Heart left ventricle (tissue), 16 donors: ENCODE measurements at regions of chr16 and their contacts with region 1.

Region 1: GRCh38 chr16:30698139-30698815 is 694 bp upstream of the SRCAP start:
- DNase-seq: peak; percentile 99 to 100 (median 99)
- ATAC-seq: peak; percentile 82 to 90 (median 88)
- H3K4me3 ChIP-seq: peak overlapping the region; percentile 79 to 100 (median 95)
- H3K27ac ChIP-seq: peak overlapping the region; percentile 95 to 100 (median 99)
- H3K4me1 ChIP-seq: peaks cover 6 to 41% (median 28%) of the 10 kb centered on the region in 12 donors
- H3K27me3 ChIP-seq: no peaks in the 10 kb centered on the region
- CTCF ChIP-seq: peak in 1 of 12 donors; percentile 8
- POLR2A ChIP-seq: peak; percentile 23 to 85

Region 2: GRCh38 chr16:30473231-30474073 is 224.8 kb before region 1 on chr16:
- intact Hi-C with region 1: no loop called
- DNase-seq: peak in 1 of 5 donors; percentile 24
- ATAC-seq: peak in 2 of 4 donors; percentile 41 to 47
- H3K4me3 ChIP-seq: peak overlapping the region in 6 of 12 donors; percentile 5 to 61 (median 16)
- H3K27ac ChIP-seq: peak overlapping the region in 2 of 12 donors; percentile 3 to 80
- H3K4me1 ChIP-seq: peaks cover 0 to 52% (median 0%) of the 10 kb centered on the region in 12 donors
- H3K27me3 ChIP-seq: peaks cover 5 to 59% (median 10%) of the 10 kb centered on the region in 9 donors
- CTCF ChIP-seq: no peak
- POLR2A ChIP-seq: no peak

Region 3: DNA sequence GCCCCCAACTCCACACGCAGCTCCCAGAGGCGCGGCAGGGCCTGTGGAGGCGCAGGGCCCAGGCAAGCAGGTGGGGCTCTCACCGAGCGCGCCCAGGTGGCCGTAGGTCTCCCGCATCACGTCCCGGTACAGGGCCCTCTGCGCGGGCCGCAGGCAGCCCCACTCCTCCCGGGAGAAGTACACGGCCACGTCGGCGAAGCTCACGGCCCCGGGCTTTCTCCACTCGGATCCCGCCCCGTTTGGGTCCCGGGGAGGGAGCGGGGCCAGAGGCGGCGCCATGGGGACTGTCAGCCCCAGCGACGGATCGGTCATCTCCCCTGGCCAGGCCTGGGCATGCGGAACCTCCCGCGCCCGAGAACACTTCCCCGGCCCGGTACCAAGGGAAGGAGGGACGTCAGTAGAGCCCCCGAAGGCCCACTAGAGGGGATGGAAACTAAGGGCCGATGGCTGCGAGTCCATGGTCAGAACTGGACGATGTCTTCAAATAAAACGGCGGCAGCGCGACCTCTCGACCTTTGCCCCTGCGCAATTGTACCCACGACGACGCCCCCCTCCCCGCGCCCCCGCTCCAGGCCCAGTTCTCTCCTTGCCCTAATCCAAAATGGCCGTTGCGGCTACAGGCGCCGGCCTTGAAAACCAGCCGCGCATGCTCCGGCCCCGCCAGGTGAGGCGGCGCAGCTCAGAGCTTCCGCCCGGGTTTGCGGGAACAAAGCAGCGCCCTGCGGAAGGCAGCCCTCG is 163.7 kb before region 1 on chr16 and contains the start of gene ZNF747:
- intact Hi-C with region 1: no loop called
- DNase-seq: peak; percentile 95 to 96 (median 96)
- ATAC-seq: peak; percentile 88 to 95 (median 90)
- H3K4me3 ChIP-seq: peak within 1 kb of the TSS; percentile 31 to 94 (median 82)
- H3K27ac ChIP-seq: peak within 1 kb of the TSS; percentile 86 to 99 (median 94)
- H3K4me1 ChIP-seq: peaks cover 0 to 34% (median 21%) of the 10 kb centered on the region in 12 donors
- H3K27me3 ChIP-seq: no peaks in the 10 kb centered on the region
- CTCF ChIP-seq: peak in 2 of 12 donors; percentile 12 to 13
- POLR2A ChIP-seq: peak in 1 of 2 donors; percentile 63
- total RNA-seq, gene ZNF747: 8.6 to 15.2 (median 10.5) TPM

Region 4: DNA sequence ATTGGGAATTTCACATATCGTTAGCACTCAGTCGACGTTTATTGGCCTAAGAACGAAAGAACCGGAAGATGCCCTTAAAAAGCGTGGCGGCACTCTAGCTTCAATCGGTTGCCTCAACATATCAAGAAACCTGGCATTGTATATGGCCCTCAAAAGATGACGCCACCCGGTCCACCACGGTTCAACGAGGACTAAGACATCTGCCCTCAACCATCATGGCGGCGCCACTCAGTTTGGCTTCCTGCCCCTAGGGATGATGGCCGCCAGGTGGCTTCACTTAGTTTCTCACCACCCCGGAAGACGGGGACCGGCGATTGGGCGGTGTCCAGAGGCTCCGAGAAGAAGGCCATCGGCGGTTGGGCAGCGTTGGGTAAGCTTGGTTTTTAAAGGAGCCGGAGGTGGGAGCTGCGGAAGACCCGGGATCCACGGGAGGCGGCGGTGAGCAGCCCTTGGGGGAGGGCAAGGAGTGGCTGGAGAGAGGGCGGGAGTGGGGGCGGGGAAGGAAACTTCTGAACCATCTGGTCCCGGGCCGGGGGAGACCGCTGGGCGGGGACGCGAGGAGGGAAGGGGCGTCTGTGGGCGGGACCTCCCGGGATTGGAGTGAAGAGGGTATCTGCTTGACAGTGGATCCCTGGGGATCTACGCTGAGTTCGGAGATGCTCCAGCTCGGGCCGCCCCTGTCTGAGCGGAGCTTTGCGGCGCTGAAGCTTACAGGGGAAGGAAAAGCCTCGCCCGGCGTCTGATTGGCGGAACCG is 47.7 kb before region 1 on chr16 and contains the start of gene PRR14:
- intact Hi-C with region 1: loop called in 2 of 10 experiments (anchors 2 to 5 kb)
- DNase-seq: peak; percentile 100
- ATAC-seq: peak; percentile 92 to 95 (median 93)
- H3K4me3 ChIP-seq: peak within 1 kb of the TSS; percentile 60 to 93 (median 76)
- H3K27ac ChIP-seq: peak within 1 kb of the TSS; percentile 69 to 99 (median 95)
- H3K4me1 ChIP-seq: peaks cover 0 to 26% (median 14%) of the 10 kb centered on the region in 12 donors
- H3K27me3 ChIP-seq: no peaks in the 10 kb centered on the region
- CTCF ChIP-seq: peak in 10 of 12 donors; percentile 19 to 54 (median 34)
- POLR2A ChIP-seq: peak in 1 of 2 donors; percentile 32
- total RNA-seq, gene PRR14: 12.3 to 26.6 (median 20.2) TPM

Region 5: DNA sequence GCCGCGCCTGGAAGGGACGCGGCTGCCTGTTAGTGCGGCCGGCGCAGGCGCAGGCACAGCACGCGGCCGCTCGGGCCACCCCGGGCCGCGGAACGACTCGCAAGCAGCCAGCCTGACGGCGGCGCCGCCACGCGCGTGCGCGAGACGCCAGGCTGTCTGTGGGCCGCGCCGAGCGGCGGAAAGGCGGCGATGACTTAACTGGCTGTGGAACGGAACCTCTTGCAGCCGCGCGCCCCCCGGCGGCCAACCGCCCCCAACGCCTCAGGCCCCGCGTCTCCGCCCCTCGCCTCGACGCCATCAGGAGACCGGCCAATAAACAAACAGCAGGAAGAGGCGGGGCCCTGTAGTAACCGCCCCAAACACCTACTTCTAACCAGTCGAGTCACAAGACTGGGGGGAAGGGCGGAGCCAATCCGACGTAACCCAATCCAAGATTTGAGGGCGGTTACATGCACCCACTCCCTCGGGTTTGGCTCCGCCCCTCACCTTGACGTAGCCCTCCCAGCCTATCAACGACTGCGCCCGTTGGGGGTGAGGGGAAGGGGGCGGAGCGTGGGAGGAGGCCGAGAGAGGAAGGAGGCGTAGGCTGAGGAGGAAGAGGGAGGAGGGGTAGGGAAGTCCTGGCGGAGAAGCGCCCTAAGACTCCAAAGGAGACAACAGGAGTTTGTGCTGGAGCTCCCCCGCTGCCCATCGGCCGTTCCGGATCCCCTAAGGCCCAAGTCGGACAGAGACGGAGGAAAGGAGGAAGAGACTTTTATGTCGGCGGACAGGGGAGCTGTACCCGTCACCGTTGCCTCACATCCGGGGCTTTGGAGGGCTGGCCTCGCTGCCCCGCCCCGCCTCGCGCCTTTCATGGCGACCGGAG is 40.2 kb before region 1 on chr16 and contains the start of gene FBRS:
- intact Hi-C with region 1: loop called in 8 of 10 experiments (anchors 1 to 5 kb)
- DNase-seq: peak; percentile 100
- ATAC-seq: peak; percentile 87 to 94 (median 92)
- H3K4me3 ChIP-seq: peak within 1 kb of the TSS; percentile 68 to 96 (median 90)
- H3K27ac ChIP-seq: peak within 1 kb of the TSS; percentile 96 to 100 (median 98)
- H3K4me1 ChIP-seq: peaks cover 0 to 47% (median 39%) of the 10 kb centered on the region in 12 donors
- H3K27me3 ChIP-seq: no peaks in the 10 kb centered on the region
- CTCF ChIP-seq: peak; percentile 74 to 99 (median 90)
- POLR2A ChIP-seq: peak in 1 of 2 donors; percentile 70
- total RNA-seq, gene FBRS: 16.3 to 38.3 (median 31.9) TPM

Region 6: DNA sequence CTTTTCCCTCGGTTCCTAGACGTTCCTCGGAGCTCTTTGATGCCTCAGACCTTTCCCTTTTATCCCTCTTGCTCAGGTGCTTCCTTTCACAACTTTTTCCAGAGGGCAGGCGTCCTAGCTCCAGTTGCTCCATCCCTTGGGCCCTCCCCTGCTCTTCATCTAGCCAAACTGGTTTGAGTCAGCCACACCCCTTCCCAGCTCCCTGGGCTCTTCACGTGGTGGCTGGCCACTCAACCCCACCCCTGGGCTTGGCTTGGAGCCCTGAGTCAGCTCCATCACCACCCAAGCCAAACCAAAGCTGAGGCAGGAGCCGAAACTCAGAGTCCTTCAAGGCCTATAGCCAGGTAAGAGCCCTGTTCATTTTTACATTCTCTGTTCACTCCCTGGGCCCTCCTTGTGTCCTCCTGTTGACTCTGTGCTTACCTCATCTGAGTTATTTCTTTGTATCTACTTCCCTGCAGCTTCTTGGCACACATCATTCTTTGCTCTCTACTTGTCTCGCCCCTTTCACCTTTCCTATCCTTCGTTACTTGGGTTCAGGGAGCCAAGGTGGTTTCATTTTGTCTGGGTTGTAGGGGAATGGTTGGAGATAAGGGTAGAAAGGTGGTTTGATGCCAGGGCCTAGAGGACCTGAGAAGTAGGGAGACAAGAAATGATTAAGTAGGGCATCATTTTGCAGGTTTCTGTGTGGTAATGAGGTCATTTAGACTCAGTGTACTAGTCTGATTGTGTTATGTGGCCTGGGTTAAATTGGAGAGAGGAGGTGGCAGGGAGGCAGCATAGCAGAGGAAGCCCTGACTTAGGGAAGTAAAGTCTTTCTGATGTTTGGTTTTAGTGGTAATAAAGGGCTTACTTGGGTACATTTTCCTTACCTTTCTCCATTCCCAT is 42.3 kb after region 1 on chr16:
- intact Hi-C with region 1: loop called in 2 of 10 experiments (anchors 5 kb)
- DNase-seq: peak; percentile 80 to 91 (median 82)
- ATAC-seq: peak; percentile 73 to 90 (median 84)
- H3K4me3 ChIP-seq: peak overlapping the region in 2 of 12 donors; percentile 8 to 18
- H3K27ac ChIP-seq: peak overlapping the region in 8 of 12 donors; percentile 9 to 65 (median 52)
- H3K4me1 ChIP-seq: peaks cover 0 to 33% (median 22%) of the 10 kb centered on the region in 12 donors
- H3K27me3 ChIP-seq: no peaks in the 10 kb centered on the region
- CTCF ChIP-seq: no peak
- POLR2A ChIP-seq: no peak

Region 7: DNA sequence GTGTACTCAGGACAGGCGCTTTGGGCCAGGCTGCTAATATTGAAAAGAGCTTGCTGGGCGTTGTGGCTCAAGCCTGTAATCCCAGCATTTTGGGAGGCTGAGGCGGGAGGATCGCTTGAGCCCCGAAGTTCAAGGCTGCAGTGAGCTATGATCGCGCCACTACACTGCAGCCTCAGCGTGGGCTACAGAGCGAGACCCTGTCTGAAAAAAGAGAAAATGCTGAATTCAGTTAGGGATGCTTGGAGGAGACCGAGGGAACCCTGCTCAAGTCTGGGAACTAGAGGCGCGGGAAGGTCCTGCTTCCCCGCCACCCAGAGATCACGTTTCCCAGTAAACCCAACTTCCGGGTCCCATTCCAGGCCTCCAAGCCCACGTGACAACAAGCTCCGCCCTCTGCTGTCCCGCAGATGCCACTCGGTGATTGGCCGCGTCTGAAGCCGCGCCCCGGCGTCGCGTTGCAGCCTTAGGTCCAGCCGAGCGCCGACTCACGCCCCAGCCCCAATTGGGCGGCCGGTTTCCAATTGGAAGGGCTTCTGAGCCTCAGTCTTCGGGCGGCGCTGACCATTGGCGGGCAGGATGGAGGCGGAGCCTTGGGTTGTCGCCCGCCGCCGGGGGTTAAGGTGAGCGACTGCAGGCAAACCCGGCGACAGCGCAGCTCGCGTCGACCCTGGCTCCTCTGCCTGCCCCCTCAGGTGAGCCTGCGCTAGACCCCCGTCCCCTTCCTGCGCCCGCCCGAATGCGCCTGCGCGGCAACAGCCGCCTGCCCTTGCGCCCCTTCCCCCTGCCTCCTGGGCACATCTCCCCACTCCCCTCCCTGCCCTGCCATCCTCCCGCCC is 49.7 kb after region 1 on chr16 and contains the start of gene PHKG2:
- intact Hi-C with region 1: loop called in 2 of 10 experiments (anchors 5 kb)
- DNase-seq: peak; percentile 99 to 100 (median 99)
- ATAC-seq: peak; percentile 98 to 99 (median 99)
- H3K4me3 ChIP-seq: peak within 1 kb of the TSS; percentile 64 to 97 (median 78)
- H3K27ac ChIP-seq: peak within 1 kb of the TSS in 11 of 12 donors; percentile 59 to 84 (median 75)
- H3K4me1 ChIP-seq: peaks cover 0 to 20% (median 5%) of the 10 kb centered on the region in 12 donors
- H3K27me3 ChIP-seq: no peaks in the 10 kb centered on the region
- CTCF ChIP-seq: no peak
- POLR2A ChIP-seq: peak in 1 of 2 donors; percentile 58
- total RNA-seq, gene PHKG2: 13.5 to 26.7 (median 17.9) TPM

Region 8: GRCh38 chr16:30761928-30762810 is 63.9 kb after region 1 on chr16 and contains the starts of genes CFAP119 and RNF40:
- intact Hi-C with region 1: loop called in 1 of 10 experiments (anchors 5 kb)
- DNase-seq: peak; percentile 96 to 97 (median 97)
- ATAC-seq: peak; percentile 93 to 98 (median 94)
- H3K4me3 ChIP-seq: peak within 1 kb of the TSS; percentile 70 to 99 (median 92)
- H3K27ac ChIP-seq: peak within 1 kb of the TSS; percentile 48 to 97 (median 90)
- H3K4me1 ChIP-seq: peaks cover 0 to 48% (median 34%) of the 10 kb centered on the region in 12 donors
- H3K27me3 ChIP-seq: no peaks in the 10 kb centered on the region
- CTCF ChIP-seq: no peak
- POLR2A ChIP-seq: peak; percentile 57 to 88
- total RNA-seq, gene CFAP119: 0.48 to 1.8 (median 0.95) TPM
- total RNA-seq, gene RNF40: 29.3 to 62.0 (median 50.3) TPM